Activated T-helper 2 cell treated with anti-CD3 and anti-CD28 coated beads, Interferon-gamma antibody, Interleukin-2, Interleukin-4, amounts not matched to agents 10 μg/mL and 5 μg/mL and 100 μg/mL, durations not matched to agents 14 hours and 24 hours and 36 hours (primary cell): ENCODE measurements at regions of chr3 and their contacts with region 1.

Region 1: DNA sequence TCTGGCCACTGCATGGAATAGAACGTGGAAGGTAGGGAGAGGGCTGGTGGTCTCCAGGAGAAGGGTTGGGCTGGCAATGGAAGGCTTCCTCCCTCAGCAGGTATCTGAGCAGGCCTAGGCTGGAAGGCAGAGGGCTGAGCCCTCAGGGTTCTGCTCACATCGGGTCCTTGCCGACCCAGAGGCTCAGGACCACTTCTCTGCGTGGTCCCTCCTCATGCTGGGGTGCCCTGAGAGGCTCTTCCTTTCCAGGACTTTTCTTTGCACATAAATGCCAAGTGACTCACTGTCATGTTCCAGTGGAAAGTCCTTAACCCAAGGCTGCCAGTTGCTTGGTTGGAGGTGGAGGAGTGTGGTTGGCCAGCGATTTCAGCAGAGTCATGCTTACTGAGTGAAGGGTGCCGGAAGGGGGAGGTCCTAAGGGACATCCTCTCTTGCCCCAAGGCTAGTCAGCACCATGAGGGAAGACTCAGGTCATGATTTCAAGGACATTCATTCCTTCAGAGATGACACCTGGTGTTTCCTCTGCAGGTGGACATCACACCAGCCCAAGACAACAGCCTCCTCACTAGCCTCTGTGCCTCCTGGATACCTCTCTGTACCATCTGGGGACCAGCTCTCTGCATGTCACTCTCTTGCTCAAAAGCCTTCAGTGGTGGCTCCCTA is 8.2 kb downstream of the SLC6A6 start:
- DNase-seq: peak; percentile 31
- H3K4me3 Mint-ChIP-seq: peak overlapping the region; percentile 55
- H3K27ac Mint-ChIP-seq: peak overlapping the region; percentile 95
- H3K4me1 Mint-ChIP-seq: peaks cover 45% of the 10 kb centered on the region
- H3K27me3 Mint-ChIP-seq: no peaks in the 10 kb centered on the region

Region 2: GRCh38 chr3:14289590-14290461 is 120.8 kb before region 1 on chr3:
- intact Hi-C with region 1: no loop called
- DNase-seq: no peak
- H3K4me3 Mint-ChIP-seq: no peak overlapping the region
- H3K27ac Mint-ChIP-seq: no peak overlapping the region
- H3K4me1 Mint-ChIP-seq: no peaks in the 10 kb centered on the region
- H3K27me3 Mint-ChIP-seq: peaks cover 15% of the 10 kb centered on the region

Region 3: GRCh38 chr3:14393440-14394111 is 17.1 kb before region 1 on chr3:
- intact Hi-C with region 1: no loop called
- DNase-seq: no peak
- H3K4me3 Mint-ChIP-seq: no peak overlapping the region
- H3K27ac Mint-ChIP-seq: no peak overlapping the region
- H3K4me1 Mint-ChIP-seq: peaks cover 6% of the 10 kb centered on the region
- H3K27me3 Mint-ChIP-seq: peaks cover 11% of the 10 kb centered on the region

Region 4: GRCh38 chr3:14426063-14426620 is 15.5 kb after region 1 on chr3:
- intact Hi-C with region 1: loop called (anchors 2 kb)
- DNase-seq: peak; percentile 42
- H3K4me3 Mint-ChIP-seq: peak overlapping the region; percentile 66
- H3K27ac Mint-ChIP-seq: peak overlapping the region; percentile 87
- H3K4me1 Mint-ChIP-seq: peaks cover 80% of the 10 kb centered on the region
- H3K27me3 Mint-ChIP-seq: no peaks in the 10 kb centered on the region

Region 5: GRCh38 chr3:15377961-15378791 is 967.5 kb after region 1 on chr3:
- intact Hi-C with region 1: no loop called
- DNase-seq: peak; percentile 92
- H3K4me3 Mint-ChIP-seq: no peak overlapping the region
- H3K27ac Mint-ChIP-seq: peak overlapping the region; percentile 76
- H3K4me1 Mint-ChIP-seq: peaks cover 10% of the 10 kb centered on the region
- H3K27me3 Mint-ChIP-seq: no peaks in the 10 kb centered on the region